ENCODE measurements at regions of chr1 and their contacts with region 1.

Region 1: DNA sequence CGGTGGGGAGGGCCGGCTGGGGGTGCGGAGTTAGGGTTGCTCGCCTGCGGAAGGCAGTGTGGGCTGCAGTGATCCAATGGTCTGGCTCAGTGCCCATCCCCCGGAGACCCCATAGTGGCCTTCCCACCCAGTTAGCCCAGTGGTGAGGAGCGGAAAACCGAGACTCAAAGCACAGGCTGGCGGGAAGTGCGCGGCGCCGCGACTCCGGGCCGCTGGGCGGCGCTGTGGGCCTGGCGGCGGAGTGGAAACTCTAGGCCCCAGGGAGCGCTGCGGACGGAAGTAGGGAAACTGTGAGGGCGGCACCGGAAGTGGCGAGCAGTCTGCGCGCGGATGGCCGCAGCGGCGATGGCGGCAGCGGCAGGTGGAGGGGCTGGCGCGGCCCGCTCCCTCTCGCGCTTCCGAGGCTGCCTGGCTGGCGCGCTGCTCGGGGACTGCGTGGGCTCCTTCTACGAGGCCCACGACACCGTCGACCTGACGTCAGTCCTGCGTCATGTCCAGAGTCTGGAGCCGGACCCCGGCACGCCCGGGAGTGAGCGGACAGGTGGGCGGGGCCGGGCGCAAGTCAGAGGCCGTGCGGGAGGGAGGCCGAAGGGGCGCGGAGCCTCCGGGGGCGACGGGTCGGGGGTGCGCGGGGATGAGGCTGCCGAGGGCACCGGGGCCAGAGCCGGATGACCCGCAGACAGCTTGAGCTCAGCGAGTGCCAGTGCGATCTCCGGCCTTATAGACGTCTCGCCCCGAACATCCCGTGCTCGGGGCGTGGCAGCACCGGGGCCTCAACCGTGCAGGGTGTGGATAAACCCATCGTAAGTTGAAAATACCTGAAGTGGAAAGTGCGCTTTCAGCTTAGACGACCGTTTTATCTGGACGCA is at the start of gene ADPRS:
- DNase-seq: peak; percentile 90 to 94 (median 92)
- ATAC-seq: peak; percentile 73 to 93 (median 92)
- H3K4me3 ChIP-seq: peak within 1 kb of the TSS; percentile 59 to 100 (median 94)
- H3K27ac ChIP-seq: peak within 1 kb of the TSS; percentile 78 to 95 (median 90)
- H3K4me1 ChIP-seq: peaks cover 0 to 50% (median 27%) of the 10 kb centered on the region in 12 donors
- H3K27me3 ChIP-seq: peaks cover 0 to 22% (median 5%) of the 10 kb centered on the region in 9 donors
- CTCF ChIP-seq: peak; percentile 97 to 100 (median 98)
- POLR2A ChIP-seq: peak in 1 of 2 donors; percentile 91
- total RNA-seq, gene ADPRS: 11.3 to 49.0 (median 16.9) TPM

Region 2: GRCh38 chr1:35857830-35858229 is 231.0 kb before region 1 on chr1:
- intact Hi-C with region 1: loop called in 2 of 10 experiments (anchors 5 to 10 kb)
- DNase-seq: no peak
- ATAC-seq: peak in 1 of 4 donors; percentile 47
- H3K4me3 ChIP-seq: no peak overlapping the region
- H3K27ac ChIP-seq: no peak overlapping the region
- H3K4me1 ChIP-seq: peaks cover 0 to 17% (median 0%) of the 10 kb centered on the region in 12 donors
- H3K27me3 ChIP-seq: no peaks in the 10 kb centered on the region
- CTCF ChIP-seq: peak in 4 of 12 donors; percentile 10 to 40 (median 27)
- POLR2A ChIP-seq: no peak

Region 3: GRCh38 chr1:35882945-35883634 is 205.7 kb before region 1 on chr1 and contains the start of gene AGO1:
- intact Hi-C with region 1: loop called in 1 of 10 experiments (anchors 10 kb)
- DNase-seq: peak; percentile 95 to 98 (median 96)
- ATAC-seq: peak; percentile 92 to 98 (median 98)
- H3K4me3 ChIP-seq: peak within 1 kb of the TSS; percentile 56 to 100 (median 88)
- H3K27ac ChIP-seq: peak within 1 kb of the TSS in 11 of 12 donors; percentile 68 to 90 (median 82)
- H3K4me1 ChIP-seq: peaks cover 0 to 44% (median 20%) of the 10 kb centered on the region in 12 donors
- H3K27me3 ChIP-seq: no peaks in the 10 kb centered on the region
- CTCF ChIP-seq: peak; percentile 93 to 100 (median 98)
- POLR2A ChIP-seq: peak; percentile 53 to 92
- total RNA-seq, gene AGO1: 16.8 to 27.0 (median 20.7) TPM

Region 4: GRCh38 chr1:36223993-36224536 is 135.3 kb after region 1 on chr1 and contains the start of gene THRAP3:
- intact Hi-C with region 1: no loop called
- DNase-seq: peak; percentile 100
- ATAC-seq: peak; percentile 95 to 98 (median 96)
- H3K4me3 ChIP-seq: peak within 1 kb of the TSS; percentile 60 to 92 (median 83)
- H3K27ac ChIP-seq: peak within 1 kb of the TSS; percentile 91 to 99 (median 98)
- H3K4me1 ChIP-seq: peaks cover 0 to 46% (median 42%) of the 10 kb centered on the region in 12 donors
- H3K27me3 ChIP-seq: no peaks in the 10 kb centered on the region
- CTCF ChIP-seq: no peak
- POLR2A ChIP-seq: peak; percentile 75 to 87
- total RNA-seq, gene THRAP3: 68.6 to 106 (median 92.8) TPM

Region 5: DNA sequence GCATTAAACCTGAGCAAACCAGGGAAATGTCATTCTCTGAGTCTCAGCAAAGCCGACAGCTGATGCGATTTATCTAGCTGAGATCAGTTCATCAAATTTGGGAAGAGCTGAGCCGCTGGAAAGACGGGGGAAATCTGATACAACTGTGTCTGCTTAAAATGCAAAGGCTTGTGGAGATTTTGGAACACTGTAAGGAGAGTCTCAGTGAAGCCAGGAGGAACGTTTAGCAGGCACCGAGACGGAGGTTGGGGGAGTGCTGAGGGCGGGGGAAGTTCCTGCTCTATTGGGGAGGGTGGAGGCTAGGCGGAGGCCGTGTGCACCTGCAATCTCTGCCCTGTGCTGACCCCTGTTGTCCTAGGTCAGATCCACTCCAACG is 537.1 kb after region 1 on chr1:
- intact Hi-C with region 1: no loop called
- DNase-seq: no peak
- ATAC-seq: no peak
- H3K4me3 ChIP-seq: no peak overlapping the region
- H3K27ac ChIP-seq: no peak overlapping the region
- H3K4me1 ChIP-seq: no peaks in the 10 kb centered on the region
- H3K27me3 ChIP-seq: peaks cover 0 to 58% (median 12%) of the 10 kb centered on the region in 9 donors
- CTCF ChIP-seq: no peak
- POLR2A ChIP-seq: no peak

Measured in heart left ventricle (tissue), 16 donors.